ENCODE measurements at regions of chr10 and their contacts with region 1.

Region 1: DNA sequence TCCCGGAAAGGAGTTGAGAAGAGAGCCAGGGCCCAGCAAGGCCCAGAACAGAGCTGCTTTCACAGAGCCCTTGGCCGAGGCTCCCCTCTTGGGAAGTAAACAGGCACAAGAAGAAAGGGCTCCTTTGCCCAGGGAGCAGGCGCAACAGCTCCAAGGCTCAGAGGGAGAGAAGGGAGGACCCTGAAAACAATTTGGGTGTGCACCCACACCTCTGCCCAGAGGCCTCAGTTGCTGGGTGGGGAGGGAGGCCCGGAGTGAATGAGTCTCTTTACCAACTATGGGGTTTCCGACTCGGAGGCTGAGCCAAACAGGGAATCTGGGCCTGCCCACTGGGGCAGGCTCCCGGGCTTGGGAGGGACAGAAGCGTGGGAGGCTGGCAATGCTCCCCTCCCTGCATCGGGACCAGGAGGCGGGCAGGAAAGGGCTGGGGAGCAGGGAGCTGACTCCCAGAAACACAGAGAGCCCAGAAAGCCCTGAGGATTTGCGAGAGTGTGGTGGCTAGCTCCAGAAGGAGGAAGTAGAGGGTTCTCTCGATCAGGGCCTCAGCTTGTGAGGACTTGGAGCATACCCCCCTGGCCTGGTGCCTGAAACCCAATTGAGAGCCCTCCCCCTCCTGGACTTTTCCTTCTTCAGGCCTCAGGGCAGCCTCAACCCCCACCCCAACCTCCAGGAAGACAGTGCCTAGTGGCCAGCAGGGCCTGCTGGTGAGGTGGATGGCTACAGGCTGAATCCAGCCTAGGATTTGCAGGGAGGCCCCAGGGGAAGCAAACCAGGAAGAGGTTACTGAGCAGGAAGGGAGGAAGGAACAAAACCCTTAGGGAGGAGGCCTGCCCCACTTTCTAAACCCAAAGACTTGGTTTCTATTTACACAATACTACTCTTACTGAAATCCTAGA is 6.2 kb downstream of the C10orf105 start:
- DNase-seq: peak; percentile 73
- H3K4me3 ChIP-seq: no peak overlapping the region
- H3K27me3 ChIP-seq: no peaks in the 10 kb centered on the region
- CTCF ChIP-seq: peak; percentile 64

Region 2: GRCh38 chr10:71671994-71672946 is 41.1 kb before region 1 on chr10:
- CTCF ChIA-PET with region 1: no interaction called
- POLR2A ChIA-PET with region 1: no interaction called
- DNase-seq: no peak
- H3K4me3 ChIP-seq: no peak overlapping the region
- H3K27me3 ChIP-seq: peaks cover 3% of the 10 kb centered on the region; the same call in 1 of the 2 replicates
- CTCF ChIP-seq: no peak

Region 3: DNA sequence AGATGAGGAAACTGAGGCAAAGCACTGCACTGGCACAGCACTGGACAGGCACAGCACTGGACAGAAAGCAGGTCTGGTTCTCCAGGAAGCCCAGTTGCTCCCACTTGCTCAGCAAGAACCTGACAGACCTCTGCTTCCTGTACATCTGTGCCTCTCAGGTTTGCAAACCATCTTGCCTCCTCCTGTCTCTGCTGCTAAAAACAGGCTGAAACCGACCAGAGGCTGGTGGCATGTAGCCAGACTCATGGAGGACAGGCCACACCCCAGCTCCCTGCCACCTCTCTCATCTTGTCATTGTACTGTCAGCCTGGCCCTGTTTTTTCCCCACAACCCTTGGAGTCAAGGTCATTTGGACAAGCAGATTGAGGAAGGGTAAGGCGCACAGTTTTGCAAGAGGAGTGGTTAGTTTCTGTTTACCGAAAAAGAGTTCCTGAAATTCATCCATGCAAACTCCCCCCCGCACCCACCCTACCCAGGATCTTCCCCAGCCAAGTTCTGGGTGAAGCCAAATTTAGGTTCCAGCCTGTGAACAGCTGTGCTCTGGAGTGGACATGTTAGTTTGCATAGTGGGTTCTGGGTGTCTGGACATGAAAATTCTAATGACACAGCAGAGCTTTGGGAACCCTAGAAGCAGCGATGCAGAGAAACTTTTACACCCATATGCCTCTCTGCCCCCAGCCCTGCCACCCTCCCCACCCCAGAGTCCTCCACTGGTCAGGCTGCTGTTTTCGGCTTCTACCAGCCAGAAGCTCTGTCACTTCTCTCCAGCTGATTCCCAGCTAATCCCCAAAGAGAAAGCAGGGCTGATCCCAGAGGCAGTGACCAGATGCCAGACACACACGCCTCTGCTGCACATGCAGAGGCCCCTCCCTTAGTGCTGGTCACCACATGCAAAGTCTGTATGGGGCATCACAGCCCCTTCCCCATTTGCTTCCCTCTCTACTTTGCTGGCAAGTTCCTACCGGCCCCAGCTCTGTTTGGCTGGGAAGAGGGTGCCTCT is 14.7 kb after region 1 on chr10:
- CTCF ChIA-PET with region 1: interaction called, 11 read pairs
- POLR2A ChIA-PET with region 1: no interaction called
- DNase-seq: no peak
- H3K4me3 ChIP-seq: no peak overlapping the region
- H3K27me3 ChIP-seq: no peaks in the 10 kb centered on the region
- CTCF ChIP-seq: no peak

Region 4: DNA sequence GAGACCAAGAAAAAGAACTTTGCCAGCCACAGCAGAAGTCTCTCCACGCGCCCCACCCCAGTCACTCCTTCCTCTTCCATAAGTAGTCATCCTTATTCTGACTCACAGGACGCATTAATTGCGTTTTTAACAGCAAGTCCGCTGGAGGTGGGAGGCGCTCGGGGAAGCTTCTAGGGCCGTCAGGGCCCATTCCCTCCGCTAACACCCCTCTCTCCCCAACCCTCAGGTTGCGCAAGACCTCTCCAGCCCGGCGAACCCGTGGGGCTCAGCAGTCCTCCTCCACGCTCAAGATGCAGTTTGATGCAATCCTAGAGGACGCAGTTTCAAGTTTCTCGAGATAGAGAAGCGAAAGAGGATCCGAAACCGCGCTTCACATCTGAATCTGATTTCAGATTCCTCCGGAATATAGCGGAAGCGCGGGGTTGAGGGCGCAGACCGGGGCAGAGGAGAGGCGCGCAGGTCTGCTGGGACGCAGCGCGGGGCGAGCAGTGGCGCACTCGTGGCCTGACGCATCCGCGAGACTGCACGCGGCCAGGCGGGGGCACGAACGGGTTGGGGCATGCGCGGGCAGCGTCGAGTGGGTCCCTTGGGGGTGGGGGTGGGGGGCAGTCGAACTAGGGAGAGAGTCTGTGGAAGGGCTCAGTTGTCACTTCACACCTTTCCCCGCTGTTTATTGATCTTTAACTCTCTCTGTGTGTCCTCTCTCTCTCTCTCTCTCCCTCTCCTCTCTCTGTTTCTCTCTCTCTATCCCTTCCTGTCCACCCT is 175.4 kb after region 1 on chr10:
- CTCF ChIA-PET with region 1: no interaction called
- POLR2A ChIA-PET with region 1: no interaction called
- DNase-seq: peak; percentile 69
- H3K4me3 ChIP-seq: peak overlapping the region; percentile 47
- H3K27me3 ChIP-seq: no peaks in the 10 kb centered on the region
- CTCF ChIP-seq: no peak

Region 5: DNA sequence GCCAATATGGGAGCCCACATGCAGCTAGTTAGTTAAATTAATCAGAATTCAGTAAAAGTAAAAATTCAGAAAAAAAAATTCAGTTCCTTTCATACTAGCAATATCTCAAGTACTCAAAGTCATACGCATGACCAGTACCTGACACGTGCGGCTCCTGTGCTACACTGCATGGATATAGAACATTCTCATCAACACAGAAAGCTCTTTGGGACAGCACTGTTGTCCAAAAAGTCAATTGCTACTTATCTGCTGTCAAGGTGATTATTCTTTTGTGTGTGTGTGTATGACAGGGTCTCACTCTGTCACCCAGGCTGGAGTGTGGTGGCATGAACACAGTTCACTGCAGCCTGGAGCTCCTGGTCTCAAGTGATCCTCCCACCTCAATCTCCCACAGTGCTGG is 487.5 kb after region 1 on chr10:
- CTCF ChIA-PET with region 1: no interaction called
- POLR2A ChIA-PET with region 1: no interaction called
- DNase-seq: no peak
- H3K4me3 ChIP-seq: no peak overlapping the region
- H3K27me3 ChIP-seq: no peaks in the 10 kb centered on the region
- CTCF ChIP-seq: no peak